Activated CD4-positive, alpha-beta memory T cell treated with anti-CD3 and anti-CD28 coated beads for 36 hours (primary cell): ENCODE measurements at regions of chrX and their contacts with region 1.

Region 1: GRCh38 chrX:16870095-16870860 is at the start of gene RBBP7:
- DNase-seq: peak; percentile 93
- H3K4me3 Mint-ChIP-seq: peak within 1 kb of the TSS; percentile 97
- H3K27ac Mint-ChIP-seq: peak within 1 kb of the TSS; percentile 98
- H3K4me1 Mint-ChIP-seq: peaks cover 26% of the 10 kb centered on the region
- H3K27me3 Mint-ChIP-seq: no peaks in the 10 kb centered on the region
- total RNA-seq, gene RBBP7: 213 to 216 TPM

Region 2: GRCh38 chrX:16719334-16720084 is 150.8 kb before region 1 on chrX and contains the start of gene SYAP1:
- CTCF ChIA-PET with region 1: no interaction called
- POLR2A ChIA-PET with region 1: no interaction called
- intact Hi-C with region 1: loop called (anchors 1 kb)
- DNase-seq: peak; percentile 94
- H3K4me3 Mint-ChIP-seq: peak within 1 kb of the TSS; percentile 92
- H3K27ac Mint-ChIP-seq: peak within 1 kb of the TSS; percentile 89
- H3K4me1 Mint-ChIP-seq: peaks cover 18% of the 10 kb centered on the region
- H3K27me3 Mint-ChIP-seq: no peaks in the 10 kb centered on the region
- total RNA-seq, gene SYAP1: 20.8 to 22.4 TPM

Region 3: DNA sequence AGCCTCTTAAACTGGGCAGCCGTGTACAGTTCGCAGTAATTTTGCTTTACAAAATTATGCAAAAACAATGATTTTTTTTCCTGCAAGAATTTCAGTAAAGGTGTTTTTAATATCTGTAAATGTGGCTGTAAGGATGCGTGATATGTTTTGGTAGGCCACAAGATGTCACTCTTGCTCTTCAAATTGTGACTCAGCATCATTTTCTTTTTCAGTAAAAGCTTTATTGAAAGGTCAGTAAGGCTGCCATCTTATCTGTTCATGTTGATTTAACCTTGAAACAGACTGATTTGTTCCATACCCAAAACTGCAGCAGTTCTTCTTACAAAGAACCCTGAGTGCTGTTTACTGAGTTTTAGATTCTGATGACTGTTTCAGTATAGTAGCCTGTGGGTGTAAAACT is 44.1 kb before region 1 on chrX:
- CTCF ChIA-PET with region 1: no interaction called
- POLR2A ChIA-PET with region 1: no interaction called
- intact Hi-C with region 1: loop called (anchors 2 kb)
- DNase-seq: no peak
- H3K4me3 Mint-ChIP-seq: no peak overlapping the region
- H3K27ac Mint-ChIP-seq: peak overlapping the region; percentile 74
- H3K4me1 Mint-ChIP-seq: peaks cover 22% of the 10 kb centered on the region
- H3K27me3 Mint-ChIP-seq: no peaks in the 10 kb centered on the region

Region 4: GRCh38 chrX:16882702-16883486 is 12.6 kb after region 1 on chrX:
- CTCF ChIA-PET with region 1: interaction called, 31 read pairs
- POLR2A ChIA-PET with region 1: interaction called, 5 read pairs
- intact Hi-C with region 1: no loop called
- DNase-seq: peak; percentile 79
- H3K4me3 Mint-ChIP-seq: peak overlapping the region; percentile 69
- H3K27ac Mint-ChIP-seq: peak overlapping the region; percentile 51
- H3K4me1 Mint-ChIP-seq: peaks cover 3% of the 10 kb centered on the region
- H3K27me3 Mint-ChIP-seq: peaks cover 2% of the 10 kb centered on the region

Region 5: GRCh38 chrX:17299206-17299605 is 428.9 kb after region 1 on chrX:
- CTCF ChIA-PET with region 1: no interaction called
- POLR2A ChIA-PET with region 1: no interaction called
- intact Hi-C with region 1: no loop called
- DNase-seq: no peak
- H3K4me3 Mint-ChIP-seq: no peak overlapping the region
- H3K27ac Mint-ChIP-seq: no peak overlapping the region
- H3K4me1 Mint-ChIP-seq: no peaks in the 10 kb centered on the region
- H3K27me3 Mint-ChIP-seq: no peaks in the 10 kb centered on the region

Region 6: GRCh38 chrX:17736856-17737706 is 866.8 kb after region 1 on chrX and contains the start of gene SCML1:
- CTCF ChIA-PET with region 1: no interaction called
- POLR2A ChIA-PET with region 1: no interaction called
- intact Hi-C with region 1: loop called (anchors 5 kb)
- DNase-seq: peak; percentile 94
- H3K4me3 Mint-ChIP-seq: peak within 1 kb of the TSS; percentile 75
- H3K27ac Mint-ChIP-seq: peak within 1 kb of the TSS; percentile 73
- H3K4me1 Mint-ChIP-seq: peaks cover 19% of the 10 kb centered on the region
- H3K27me3 Mint-ChIP-seq: peaks cover 4% of the 10 kb centered on the region
- total RNA-seq, gene SCML1: 3.8 TPM